Heart left ventricle (tissue), 16 donors: ENCODE measurements at regions of chr4 and their contacts with region 1.

Region 1: GRCh38 chr4:78945651-78946179 is 6.5 kb upstream of the PAQR3 start:
- DNase-seq: no peak
- ATAC-seq: no peak
- H3K4me3 ChIP-seq: no peak overlapping the region
- H3K27ac ChIP-seq: no peak overlapping the region
- H3K4me1 ChIP-seq: no peaks in the 10 kb centered on the region
- H3K27me3 ChIP-seq: no peaks in the 10 kb centered on the region
- CTCF ChIP-seq: no peak
- POLR2A ChIP-seq: no peak

Region 2: DNA sequence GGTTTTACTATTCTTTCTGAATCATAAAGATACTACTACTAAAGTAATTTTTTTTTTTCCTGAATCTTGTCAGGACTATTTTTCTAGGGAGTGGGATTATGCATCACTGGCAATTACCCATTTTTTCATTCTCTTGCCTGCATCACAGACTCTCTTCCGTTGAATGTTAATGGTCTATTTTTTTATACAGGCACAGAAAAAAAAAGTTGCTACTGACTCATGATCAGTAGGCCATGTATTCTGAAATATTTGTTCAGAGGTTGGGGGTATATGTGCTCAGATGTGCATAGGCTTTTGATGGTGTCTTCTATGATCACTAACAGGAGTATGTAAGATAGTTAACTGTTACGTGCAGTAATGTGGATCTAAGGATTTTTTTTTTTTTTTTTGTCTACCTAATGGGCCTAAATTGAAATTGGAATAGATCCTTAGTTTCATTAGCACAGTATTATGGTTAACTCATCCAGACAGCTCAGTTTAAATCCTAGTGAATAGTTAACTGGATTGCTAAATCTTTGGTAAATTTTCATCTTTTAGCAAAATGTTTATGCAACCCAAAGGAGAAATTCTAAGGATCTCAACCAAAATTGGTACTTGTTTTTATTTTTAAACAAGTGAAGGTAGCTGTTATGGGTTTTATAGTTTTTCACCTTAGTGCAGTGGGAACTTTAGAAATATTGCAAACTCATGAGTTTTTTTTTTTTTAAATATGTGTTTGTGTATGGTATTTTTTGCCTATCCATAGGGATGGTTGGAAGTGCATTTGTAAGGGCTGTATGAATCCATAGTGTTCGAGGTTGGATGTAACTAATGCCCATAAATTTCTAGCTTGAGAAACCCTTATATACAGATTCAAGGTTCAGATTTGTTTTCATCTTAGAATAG is 157.5 kb before region 1 on chr4:
- intact Hi-C with region 1: no loop called
- DNase-seq: no peak
- ATAC-seq: no peak
- H3K4me3 ChIP-seq: no peak overlapping the region
- H3K27ac ChIP-seq: no peak overlapping the region
- H3K4me1 ChIP-seq: peaks cover 0 to 52% (median 25%) of the 10 kb centered on the region in 12 donors
- H3K27me3 ChIP-seq: no peaks in the 10 kb centered on the region
- CTCF ChIP-seq: no peak
- POLR2A ChIP-seq: no peak

Region 3: DNA sequence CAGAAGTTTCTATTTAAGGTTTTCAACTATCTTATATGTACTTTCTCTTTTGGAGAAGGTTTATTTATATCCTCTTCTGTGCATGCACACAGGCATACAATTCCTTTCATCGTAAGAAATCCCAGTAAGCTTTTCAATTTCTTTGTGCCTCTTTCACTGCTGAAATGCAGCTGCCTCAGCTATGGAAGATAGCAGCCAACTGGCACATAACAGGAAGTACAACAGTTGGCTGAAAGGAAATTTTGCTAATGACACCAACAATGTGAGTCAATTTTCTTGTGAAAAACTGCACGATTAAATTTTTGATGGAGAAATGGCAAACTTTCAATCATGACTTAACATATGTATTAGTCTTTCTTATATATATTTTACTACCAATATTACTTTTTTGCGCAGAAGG is 68.0 kb after region 1 on chr4:
- intact Hi-C with region 1: no loop called
- DNase-seq: no peak
- ATAC-seq: no peak
- H3K4me3 ChIP-seq: no peak overlapping the region
- H3K27ac ChIP-seq: no peak overlapping the region
- H3K4me1 ChIP-seq: peaks cover 0 to 8% (median 0%) of the 10 kb centered on the region in 12 donors
- H3K27me3 ChIP-seq: no peaks in the 10 kb centered on the region
- CTCF ChIP-seq: no peak
- POLR2A ChIP-seq: no peak

Region 4: GRCh38 chr4:80202190-80202711 is 1256.5 kb after region 1 on chr4:
- intact Hi-C with region 1: loop called in 1 of 10 experiments (anchors 5 kb)
- DNase-seq: peak; percentile 82 to 94 (median 86)
- ATAC-seq: peak; percentile 62 to 90 (median 84)
- H3K4me3 ChIP-seq: peak overlapping the region; percentile 42 to 69 (median 62)
- H3K27ac ChIP-seq: peak overlapping the region in 11 of 12 donors; percentile 10 to 91 (median 57)
- H3K4me1 ChIP-seq: peaks cover 0 to 33% (median 10%) of the 10 kb centered on the region in 12 donors
- H3K27me3 ChIP-seq: peaks cover 0 to 60% (median 38%) of the 10 kb centered on the region in 9 donors
- CTCF ChIP-seq: peak; percentile 69 to 92 (median 84)
- POLR2A ChIP-seq: no peak